Colonic mucosa (tissue), 4 donors: ENCODE measurements at regions of chr14 and their contacts with region 1.

Region 1: DNA sequence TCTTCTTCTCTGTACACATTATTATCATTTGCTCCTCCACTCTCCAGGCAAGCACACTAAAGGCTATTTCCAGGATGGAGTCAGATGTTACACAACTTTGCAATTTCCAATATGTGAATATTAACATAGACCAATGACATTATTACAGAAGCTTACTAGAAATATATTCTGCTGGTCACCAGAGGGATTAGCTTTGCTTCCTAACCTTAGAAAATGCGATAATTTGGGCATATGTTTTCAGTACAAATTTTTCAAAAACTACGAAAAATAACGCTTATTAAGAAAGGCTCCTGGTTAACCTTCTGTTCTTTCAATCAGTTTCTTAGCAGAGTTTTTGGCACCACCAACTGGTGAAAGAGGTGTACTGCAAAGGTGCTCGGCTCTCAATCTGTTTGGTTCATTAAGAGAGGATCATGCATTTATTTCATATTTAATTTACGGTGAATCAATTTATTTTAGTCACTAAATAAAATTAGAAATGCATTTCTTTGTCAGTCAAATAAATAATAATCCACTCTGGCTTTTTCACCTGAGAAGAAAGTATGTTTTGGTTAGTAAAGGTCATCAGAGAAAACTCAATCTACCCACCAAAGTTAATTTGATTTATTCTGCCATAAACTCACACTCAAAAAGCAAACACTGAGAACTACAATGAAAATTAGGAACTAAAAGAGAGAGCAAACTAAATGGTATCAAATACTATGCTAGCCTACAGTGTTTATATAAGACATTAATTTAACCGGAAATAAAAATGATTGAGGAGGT is 39.2 kb downstream of the EFCAB11 start:
- DNase-seq: peak; percentile 60
- H3K4me3 ChIP-seq: no peak overlapping the region
- H3K27ac ChIP-seq: no peak overlapping the region
- H3K4me1 ChIP-seq: peaks cover 12% of the 10 kb centered on the region
- H3K27me3 ChIP-seq: no peaks in the 10 kb centered on the region
- CTCF ChIP-seq: peak; percentile 95

Region 2: DNA sequence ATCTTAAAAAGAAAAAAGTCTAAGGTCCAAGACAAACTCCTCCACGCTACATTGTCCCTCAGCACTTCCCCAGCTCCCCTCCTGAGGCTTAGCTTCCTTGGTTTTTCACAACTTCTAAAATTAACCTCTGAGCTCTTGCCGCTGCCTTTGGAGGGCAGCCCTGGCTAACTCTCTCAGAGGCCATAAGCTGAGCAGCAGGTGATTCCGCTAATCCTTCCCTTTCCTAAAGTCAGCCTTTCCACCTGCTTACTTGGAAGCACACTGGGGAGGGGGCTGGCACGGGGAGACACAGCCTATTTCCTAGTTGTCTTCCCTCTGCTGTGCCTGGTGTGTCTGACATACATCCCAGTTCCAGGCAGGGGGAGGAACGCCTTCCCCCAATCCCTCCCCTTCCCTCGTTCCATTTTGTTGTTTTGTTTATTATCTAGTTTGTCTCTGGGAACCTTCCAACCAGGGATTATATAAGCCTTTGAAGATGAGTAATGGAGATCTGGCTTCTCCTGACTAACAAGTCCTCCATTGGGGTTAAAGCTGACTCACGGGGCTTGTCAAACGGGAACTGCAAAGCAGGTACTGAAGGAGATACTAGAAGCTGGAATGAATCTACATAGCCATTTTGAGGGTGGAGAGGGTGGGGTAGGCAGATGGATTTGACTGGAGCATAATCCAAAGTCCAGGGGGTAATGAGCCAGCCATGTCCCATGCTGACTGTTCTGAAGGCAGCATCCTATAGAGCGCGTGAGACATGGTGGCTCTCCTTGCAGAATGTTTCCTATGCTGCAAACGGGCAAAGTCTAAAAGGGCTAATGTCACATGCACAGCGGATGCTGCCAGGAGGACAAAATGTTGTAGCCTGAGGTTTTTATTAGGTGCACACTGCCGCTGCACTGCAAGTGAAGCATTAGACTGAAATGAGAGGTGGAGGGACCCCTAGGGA is 729.1 kb before region 1 on chr14:
- intact Hi-C with region 1: loop called (anchors 5 kb)
- DNase-seq: no peak
- H3K4me3 ChIP-seq: no peak overlapping the region
- H3K27ac ChIP-seq: no peak overlapping the region
- H3K4me1 ChIP-seq: no peaks in the 10 kb centered on the region
- H3K27me3 ChIP-seq: no peaks in the 10 kb centered on the region
- CTCF ChIP-seq: no peak

Region 3: DNA sequence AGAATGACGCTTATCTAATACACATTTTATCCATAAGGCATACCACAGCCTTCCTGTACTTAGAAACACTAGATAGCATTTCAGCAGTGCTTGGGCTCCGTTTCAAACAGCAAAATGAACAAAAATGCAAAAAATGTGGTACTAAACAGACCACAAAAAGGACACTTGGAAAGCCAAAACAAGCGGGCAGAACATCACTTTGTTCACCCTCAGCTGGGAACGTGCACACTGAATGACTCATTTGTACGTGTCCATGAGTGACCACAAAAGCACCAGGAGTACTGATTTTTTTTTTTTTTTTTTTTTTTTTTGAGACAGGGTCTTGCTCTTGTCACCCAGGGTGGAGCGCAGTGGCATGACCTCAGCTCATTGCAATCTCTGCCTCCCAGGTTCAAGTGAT is 489.4 kb before region 1 on chr14:
- intact Hi-C with region 1: loop called (anchors 10 kb)
- DNase-seq: no peak
- H3K4me3 ChIP-seq: no peak overlapping the region
- H3K27ac ChIP-seq: no peak overlapping the region
- H3K4me1 ChIP-seq: peaks cover 6% of the 10 kb centered on the region
- H3K27me3 ChIP-seq: no peaks in the 10 kb centered on the region
- CTCF ChIP-seq: no peak

Region 4: GRCh38 chr14:89445273-89445973 is 469.9 kb before region 1 on chr14:
- intact Hi-C with region 1: no loop called
- DNase-seq: no peak
- H3K4me3 ChIP-seq: no peak overlapping the region
- H3K27ac ChIP-seq: no peak overlapping the region
- H3K4me1 ChIP-seq: peaks cover 4% of the 10 kb centered on the region
- H3K27me3 ChIP-seq: no peaks in the 10 kb centered on the region
- CTCF ChIP-seq: no peak